Activated CD4-positive, alpha-beta memory T cell treated with anti-CD3 and anti-CD28 coated beads for 36 hours (primary cell): ENCODE measurements at regions of chr3 and their contacts with region 1.

Region 1: GRCh38 chr3:150495563-150496168 is 50.6 kb downstream of the SERP1 start:
- DNase-seq: no peak
- H3K4me3 Mint-ChIP-seq: no peak overlapping the region
- H3K27ac Mint-ChIP-seq: no peak overlapping the region
- H3K4me1 Mint-ChIP-seq: no peaks in the 10 kb centered on the region
- H3K27me3 Mint-ChIP-seq: no peaks in the 10 kb centered on the region

Region 2: GRCh38 chr3:149936812-149937233 is 558.8 kb before region 1 on chr3:
- CTCF ChIA-PET with region 1: no interaction called
- POLR2A ChIA-PET with region 1: no interaction called
- intact Hi-C with region 1: loop called (anchors 10 kb)
- DNase-seq: peak; percentile 50
- H3K4me3 Mint-ChIP-seq: no peak overlapping the region
- H3K27ac Mint-ChIP-seq: no peak overlapping the region
- H3K4me1 Mint-ChIP-seq: peaks cover 19% of the 10 kb centered on the region
- H3K27me3 Mint-ChIP-seq: no peaks in the 10 kb centered on the region

Region 3: DNA sequence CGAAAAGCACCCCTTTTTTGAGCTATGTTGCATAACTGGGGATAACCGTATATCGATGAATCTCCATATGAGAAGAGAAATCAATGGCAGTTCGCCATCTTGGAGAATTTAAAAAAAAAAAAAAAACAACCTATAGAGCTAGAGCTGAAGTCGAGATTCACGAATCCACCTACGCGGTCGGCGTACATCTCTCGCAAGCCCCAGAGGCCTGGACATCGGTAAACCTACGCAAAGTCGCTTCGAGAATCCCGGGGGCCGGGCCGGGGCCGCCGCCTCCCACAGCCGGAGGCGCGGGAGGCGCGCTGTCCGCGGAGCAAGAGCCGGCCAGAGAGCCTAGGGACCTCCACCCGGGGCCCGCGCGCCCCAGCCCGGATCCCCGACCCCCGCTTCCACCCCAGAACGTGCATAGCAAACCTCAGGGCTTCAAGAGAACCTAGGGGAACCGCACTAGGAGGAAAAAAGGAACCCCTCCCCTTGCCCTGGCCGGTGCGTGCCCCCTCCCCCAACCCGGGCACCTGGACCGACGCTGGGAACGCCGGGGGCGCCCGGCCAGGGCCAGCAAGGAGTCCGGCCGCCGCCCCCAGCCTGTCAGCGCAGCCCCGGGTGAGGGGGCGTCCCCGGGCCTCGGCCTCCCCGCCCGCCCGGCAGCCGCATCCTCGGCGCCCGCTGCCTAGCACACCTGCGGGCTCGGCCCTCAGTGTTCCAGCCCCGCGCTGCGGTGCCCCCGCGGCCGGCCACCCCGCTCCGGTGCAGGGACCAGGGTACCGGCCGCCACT is 525.5 kb before region 1 on chr3:
- CTCF ChIA-PET with region 1: no interaction called
- POLR2A ChIA-PET with region 1: no interaction called
- intact Hi-C with region 1: loop called (anchors 10 kb)
- DNase-seq: peak; percentile 83
- H3K4me3 Mint-ChIP-seq: peak overlapping the region; percentile 77
- H3K27ac Mint-ChIP-seq: no peak overlapping the region
- H3K4me1 Mint-ChIP-seq: peaks cover 11% of the 10 kb centered on the region
- H3K27me3 Mint-ChIP-seq: peaks cover 21% of the 10 kb centered on the region

Region 4: GRCh38 chr3:150227839-150228238 is 267.8 kb before region 1 on chr3:
- CTCF ChIA-PET with region 1: interaction called, 9 read pairs
- POLR2A ChIA-PET with region 1: no interaction called
- intact Hi-C with region 1: loop called (anchors 1 kb)
- DNase-seq: peak; percentile 49
- H3K4me3 Mint-ChIP-seq: no peak overlapping the region
- H3K27ac Mint-ChIP-seq: no peak overlapping the region
- H3K4me1 Mint-ChIP-seq: no peaks in the 10 kb centered on the region
- H3K27me3 Mint-ChIP-seq: peaks cover 24% of the 10 kb centered on the region

Region 5: DNA sequence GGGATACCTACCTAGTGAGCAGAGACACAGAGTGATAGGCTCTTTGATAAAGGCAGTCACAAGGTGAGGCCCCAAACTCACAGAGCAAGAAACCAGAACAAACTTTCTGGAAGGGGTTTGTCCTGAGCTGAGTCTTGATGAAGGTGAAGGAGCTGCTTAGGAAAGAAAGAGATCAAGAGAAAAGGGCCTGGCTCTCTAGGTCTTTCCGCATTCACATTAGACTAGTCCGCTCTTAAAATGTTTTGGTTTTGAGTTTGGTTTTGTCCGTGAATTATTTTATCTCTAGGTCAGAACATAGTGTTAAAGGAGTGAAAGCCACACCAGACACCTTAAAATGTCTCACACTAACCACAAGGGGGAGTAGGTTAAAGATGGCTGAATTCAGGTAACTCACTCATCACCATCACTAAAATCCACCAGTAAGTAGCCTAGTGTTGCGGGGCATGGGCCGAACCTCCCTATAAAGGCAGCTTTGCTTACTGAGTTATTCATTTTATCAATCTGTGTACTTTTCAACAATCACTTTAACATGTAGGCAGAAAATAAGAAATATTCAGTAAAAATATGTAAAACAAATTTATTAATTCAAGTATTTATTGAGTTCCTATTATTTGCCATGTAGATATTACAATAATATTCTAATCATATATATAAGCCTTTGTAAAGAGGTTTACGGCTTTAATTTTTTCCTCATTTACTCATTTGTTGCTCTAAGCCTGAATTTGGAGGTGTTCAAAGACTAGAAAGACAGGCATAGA is 209.1 kb before region 1 on chr3:
- CTCF ChIA-PET with region 1: interaction called, 44 read pairs
- POLR2A ChIA-PET with region 1: no interaction called
- intact Hi-C with region 1: loop called (anchors 1 kb)
- DNase-seq: peak; percentile 12
- H3K4me3 Mint-ChIP-seq: no peak overlapping the region
- H3K27ac Mint-ChIP-seq: no peak overlapping the region
- H3K4me1 Mint-ChIP-seq: no peaks in the 10 kb centered on the region
- H3K27me3 Mint-ChIP-seq: peaks cover 14% of the 10 kb centered on the region

Region 6: DNA sequence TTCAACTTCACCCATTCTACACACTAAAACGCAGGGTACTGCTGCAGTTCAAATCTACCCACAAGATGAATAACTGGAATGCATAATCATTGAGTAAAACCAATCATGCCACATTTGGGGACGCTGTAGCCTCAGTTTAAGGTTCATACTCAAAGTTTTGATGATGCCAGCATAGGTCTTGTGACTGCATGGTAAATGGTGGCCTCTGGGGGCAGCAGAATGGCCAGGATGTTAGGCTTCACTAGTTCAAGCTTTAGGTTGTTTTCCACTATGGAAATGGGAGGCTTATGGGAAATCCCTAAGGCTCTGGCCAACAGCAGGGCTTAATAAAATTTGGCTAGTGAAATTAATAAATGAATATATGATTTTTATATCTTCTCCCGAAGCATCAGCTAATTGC is 191.9 kb before region 1 on chr3:
- CTCF ChIA-PET with region 1: interaction called, 3 read pairs
- POLR2A ChIA-PET with region 1: no interaction called
- intact Hi-C with region 1: loop called (anchors 5 kb)
- DNase-seq: peak; percentile 24
- H3K4me3 Mint-ChIP-seq: no peak overlapping the region
- H3K27ac Mint-ChIP-seq: no peak overlapping the region
- H3K4me1 Mint-ChIP-seq: no peaks in the 10 kb centered on the region
- H3K27me3 Mint-ChIP-seq: peaks cover 20% of the 10 kb centered on the region